ENCODE measurements at regions of chr3 and their contacts with region 1.

Region 1: DNA sequence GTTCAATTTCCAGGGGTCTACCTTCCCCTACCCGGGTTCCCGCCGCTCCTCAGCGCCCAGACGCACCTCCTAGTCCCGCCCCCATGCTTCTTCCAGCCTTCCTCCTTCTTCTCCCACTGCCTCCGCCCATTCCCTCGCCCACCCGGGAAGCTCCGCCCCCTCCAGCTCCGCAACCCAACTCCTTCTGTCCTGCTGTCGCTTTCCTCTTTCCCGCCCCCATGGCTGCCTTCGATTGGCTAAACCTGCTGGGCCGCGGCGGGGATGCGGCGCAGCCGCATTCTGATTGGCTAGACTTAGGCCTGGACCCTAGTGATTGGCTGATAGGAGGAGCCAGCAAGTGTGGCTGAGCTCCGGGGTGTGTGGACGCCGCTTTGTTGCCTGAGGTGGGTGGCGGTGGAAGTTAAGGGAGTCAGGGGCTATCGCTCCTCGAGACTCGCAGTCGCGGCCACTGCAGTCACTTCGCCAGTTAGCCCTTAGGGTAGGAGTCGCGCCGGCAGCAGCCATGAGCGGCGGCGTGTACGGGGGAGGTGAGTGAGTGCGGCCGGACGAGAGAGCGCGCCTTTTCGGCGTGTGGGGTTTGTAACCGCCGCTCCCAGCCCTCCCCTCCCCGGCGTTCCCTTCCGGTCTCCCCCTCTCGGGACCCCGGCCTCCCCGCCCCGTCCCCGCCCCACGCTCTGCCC is at the start of gene ACTL6A:
- DNase-seq: peak; percentile 99
- H3K4me3 Mint-ChIP-seq: peak within 1 kb of the TSS; percentile 98
- H3K27ac Mint-ChIP-seq: peak within 1 kb of the TSS; percentile 98
- H3K4me1 Mint-ChIP-seq: peaks cover 28% of the 10 kb centered on the region
- H3K27me3 Mint-ChIP-seq: peaks cover 2% of the 10 kb centered on the region
- total RNA-seq, gene ACTL6A: 101 to 102 TPM

Region 2: DNA sequence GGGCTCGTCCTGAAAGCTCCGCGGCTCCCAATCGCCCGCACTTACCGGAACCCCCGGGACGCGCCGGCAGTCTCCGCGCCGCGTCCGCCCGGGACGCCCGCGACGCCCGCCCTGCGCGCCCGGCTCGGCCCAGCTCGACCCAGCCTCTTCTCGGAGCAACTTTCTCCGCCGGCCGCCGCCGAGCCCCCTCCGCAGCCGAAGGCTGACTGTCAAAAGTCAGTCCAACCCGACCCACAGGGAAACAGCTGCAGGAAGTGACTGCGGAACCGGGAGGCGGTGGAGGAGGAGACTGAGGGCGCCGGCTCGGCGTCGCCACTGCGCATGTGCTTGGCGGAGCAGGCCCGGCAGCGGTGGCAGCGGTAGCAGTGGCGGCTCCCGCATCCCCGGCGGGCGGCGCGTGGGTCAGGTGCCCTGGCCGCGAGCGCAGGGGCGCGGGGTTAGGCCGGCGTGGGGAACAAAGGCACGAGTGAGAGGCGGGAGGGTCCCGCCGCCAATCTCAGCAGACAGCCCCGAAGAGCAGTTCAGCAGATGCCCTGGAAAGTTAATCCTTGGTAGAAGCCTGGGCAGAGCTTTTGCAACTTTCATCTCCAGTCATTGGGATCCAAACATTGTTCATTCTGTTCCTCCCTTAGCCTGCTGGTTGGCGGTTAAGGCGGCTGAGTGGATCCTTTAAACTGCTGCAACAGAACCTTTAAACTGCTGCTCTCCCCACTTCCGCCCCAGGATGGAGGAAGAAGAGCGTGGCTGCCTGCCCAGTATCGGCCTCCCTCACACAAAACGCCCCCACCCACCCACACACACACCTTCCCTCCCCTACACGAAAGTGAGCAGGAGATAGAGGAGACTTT is 491.0 kb before region 1 on chr3 and contains the start of gene ZMAT3:
- CTCF ChIA-PET with region 1: no interaction called
- POLR2A ChIA-PET with region 1: no interaction called
- intact Hi-C with region 1: loop called (anchors 2 kb)
- DNase-seq: peak; percentile 89
- H3K4me3 Mint-ChIP-seq: peak within 1 kb of the TSS; percentile 96
- H3K27ac Mint-ChIP-seq: peak within 1 kb of the TSS; percentile 89
- H3K4me1 Mint-ChIP-seq: peaks cover 35% of the 10 kb centered on the region
- H3K27me3 Mint-ChIP-seq: no peaks in the 10 kb centered on the region
- total RNA-seq, gene ZMAT3: 9.0 TPM

Region 3: DNA sequence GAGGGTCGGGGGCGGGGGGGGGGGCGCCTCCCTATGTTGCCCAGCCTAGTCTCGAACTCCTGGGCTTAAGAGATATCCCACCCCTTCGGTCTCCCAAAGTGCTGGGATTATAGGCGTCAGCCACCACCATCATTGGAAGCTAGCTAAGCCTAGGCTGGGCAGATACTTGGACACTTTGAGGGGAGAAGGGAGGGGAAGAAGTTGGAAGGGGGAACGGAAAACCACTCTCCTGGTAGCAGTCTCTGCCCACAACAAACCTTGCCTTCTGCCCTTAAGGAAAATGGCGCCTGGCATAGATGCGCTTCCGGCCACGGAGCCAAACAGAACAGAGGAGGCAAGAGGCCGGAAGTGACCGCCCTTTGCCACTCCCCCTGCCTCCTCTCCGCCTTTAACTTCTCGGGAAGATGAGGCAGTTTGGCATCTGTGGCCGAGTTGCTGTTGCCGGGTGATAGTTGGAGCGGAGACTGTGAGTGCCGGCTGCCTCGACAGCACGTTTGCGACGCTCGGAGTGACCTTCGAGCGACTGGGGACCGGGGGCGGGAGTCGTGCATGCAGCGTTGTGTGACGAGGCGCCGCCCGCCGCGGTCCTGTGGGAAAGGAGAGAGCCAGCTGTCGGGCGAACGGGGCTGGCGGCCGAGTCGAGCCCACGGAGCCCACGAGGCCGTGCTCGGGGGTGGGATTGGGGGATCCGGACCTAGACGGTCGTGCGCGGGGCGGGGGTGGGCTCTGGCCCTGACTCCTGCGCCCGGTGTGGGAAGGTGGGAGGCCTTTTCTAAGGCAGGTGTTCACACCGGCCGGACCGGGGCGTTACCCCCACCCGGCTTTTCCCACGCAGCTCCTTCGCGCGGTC is 215.2 kb before region 1 on chr3 and contains the start of gene MFN1:
- CTCF ChIA-PET with region 1: interaction called, 3 read pairs
- POLR2A ChIA-PET with region 1: no interaction called
- intact Hi-C with region 1: loop called (anchors 1 kb)
- DNase-seq: peak; percentile 94
- H3K4me3 Mint-ChIP-seq: peak within 1 kb of the TSS; percentile 98
- H3K27ac Mint-ChIP-seq: peak within 1 kb of the TSS; percentile 94
- H3K4me1 Mint-ChIP-seq: peaks cover 23% of the 10 kb centered on the region
- H3K27me3 Mint-ChIP-seq: no peaks in the 10 kb centered on the region
- total RNA-seq, gene MFN1: 31.1 to 31.3 TPM

Region 4: DNA sequence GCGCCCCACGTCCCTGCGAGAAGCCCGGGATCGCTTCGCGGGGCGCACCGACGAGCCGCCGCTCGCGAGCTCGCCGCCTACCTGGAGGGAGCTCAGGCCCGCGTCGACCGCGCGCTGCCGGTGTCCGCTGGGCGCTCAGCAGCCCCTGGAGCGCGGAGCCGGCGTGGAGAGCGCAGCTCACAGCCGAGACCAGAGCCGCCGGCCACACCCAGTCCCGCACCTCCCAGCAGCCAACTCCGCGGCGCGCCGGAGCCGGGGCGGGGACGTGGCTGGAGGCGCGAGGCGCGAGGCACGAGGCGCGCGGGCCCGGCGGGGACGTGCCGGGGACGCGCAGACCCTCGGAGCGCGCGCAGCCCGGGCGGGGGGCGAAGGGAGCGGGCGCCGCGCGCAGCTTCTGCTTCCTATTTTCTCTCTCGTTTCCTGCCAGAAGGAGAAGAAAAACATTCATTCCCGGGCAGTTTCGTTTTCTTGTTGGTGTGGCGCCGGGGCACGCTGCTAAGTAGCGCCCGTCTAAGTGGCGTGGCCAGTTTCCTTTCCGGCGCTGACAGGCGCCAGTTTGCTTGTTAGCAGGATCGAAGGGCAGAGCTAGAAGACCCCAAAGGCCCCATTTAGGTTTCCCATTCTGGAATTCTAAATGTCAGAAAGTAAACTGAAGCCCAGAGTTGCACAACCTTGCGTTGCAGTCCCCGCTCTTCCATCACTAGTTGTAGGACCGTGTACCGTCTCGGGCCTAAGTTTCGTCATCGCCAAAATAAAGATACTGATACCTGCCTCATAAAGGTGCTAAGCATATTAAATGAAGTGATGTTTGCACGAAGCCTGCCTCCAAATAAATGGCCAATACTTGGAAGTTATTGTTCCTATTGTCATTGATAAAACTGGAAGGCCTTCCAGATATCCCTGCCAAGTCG is 111.2 kb before region 1 on chr3 and contains the start of gene GNB4:
- CTCF ChIA-PET with region 1: interaction called, 3 read pairs
- POLR2A ChIA-PET with region 1: no interaction called
- intact Hi-C with region 1: loop called (anchors 1 kb)
- DNase-seq: peak; percentile 56
- H3K4me3 Mint-ChIP-seq: peak within 1 kb of the TSS; percentile 68
- H3K27ac Mint-ChIP-seq: no peak within 1 kb of the TSS
- H3K4me1 Mint-ChIP-seq: peaks cover 14% of the 10 kb centered on the region
- H3K27me3 Mint-ChIP-seq: peaks cover 58% of the 10 kb centered on the region
- total RNA-seq, gene GNB4: 0.51 to 0.59 TPM

Region 5: DNA sequence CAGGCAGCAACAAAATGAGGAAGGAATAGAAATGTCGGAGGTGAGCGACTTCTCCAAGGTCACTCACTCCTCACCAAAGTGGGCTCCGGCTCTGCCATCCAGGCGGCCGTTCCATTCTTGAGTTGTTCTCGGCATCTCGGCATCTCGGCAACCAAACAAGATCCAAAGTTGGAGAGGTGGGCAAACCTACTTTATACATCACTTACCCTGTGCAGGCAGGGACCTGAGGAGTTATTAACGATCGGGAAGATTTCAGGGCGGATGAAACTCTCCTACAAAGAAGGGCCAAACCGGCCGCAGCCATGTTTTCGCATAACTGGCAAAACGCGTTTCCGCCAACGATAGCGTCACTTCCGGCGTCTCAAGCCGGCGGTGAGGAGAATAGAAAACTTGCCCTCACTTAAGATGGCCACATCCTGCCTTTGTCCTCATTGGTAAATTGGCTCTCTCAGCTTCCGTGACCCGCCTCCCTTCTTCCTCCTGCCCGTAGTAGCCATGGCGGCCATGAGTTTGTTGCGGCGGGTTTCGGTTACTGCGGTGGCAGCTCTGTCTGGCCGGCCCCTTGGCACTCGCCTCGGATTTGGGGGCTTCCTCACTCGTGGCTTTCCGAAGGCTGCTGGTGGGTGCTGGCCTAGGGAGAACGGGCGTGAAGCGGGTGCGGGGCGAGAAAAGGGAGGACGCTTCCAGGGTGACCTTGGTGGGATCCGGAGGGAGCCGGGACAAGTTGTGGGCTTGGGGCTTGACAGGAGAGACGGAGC is 41.8 kb after region 1 on chr3 and contains the starts of genes MRPL47 and NDUFB5:
- CTCF ChIA-PET with region 1: no interaction called
- POLR2A ChIA-PET with region 1: interaction called, 8 read pairs
- intact Hi-C with region 1: loop called (anchors 1 kb)
- DNase-seq: peak; percentile 96
- H3K4me3 Mint-ChIP-seq: peak within 1 kb of the TSS; percentile 99
- H3K27ac Mint-ChIP-seq: peak within 1 kb of the TSS; percentile 98
- H3K4me1 Mint-ChIP-seq: peaks cover 40% of the 10 kb centered on the region
- H3K27me3 Mint-ChIP-seq: no peaks in the 10 kb centered on the region
- total RNA-seq, gene MRPL47: 51.4 to 54.0 TPM
- total RNA-seq, gene NDUFB5: 133 to 147 TPM

Region 6: DNA sequence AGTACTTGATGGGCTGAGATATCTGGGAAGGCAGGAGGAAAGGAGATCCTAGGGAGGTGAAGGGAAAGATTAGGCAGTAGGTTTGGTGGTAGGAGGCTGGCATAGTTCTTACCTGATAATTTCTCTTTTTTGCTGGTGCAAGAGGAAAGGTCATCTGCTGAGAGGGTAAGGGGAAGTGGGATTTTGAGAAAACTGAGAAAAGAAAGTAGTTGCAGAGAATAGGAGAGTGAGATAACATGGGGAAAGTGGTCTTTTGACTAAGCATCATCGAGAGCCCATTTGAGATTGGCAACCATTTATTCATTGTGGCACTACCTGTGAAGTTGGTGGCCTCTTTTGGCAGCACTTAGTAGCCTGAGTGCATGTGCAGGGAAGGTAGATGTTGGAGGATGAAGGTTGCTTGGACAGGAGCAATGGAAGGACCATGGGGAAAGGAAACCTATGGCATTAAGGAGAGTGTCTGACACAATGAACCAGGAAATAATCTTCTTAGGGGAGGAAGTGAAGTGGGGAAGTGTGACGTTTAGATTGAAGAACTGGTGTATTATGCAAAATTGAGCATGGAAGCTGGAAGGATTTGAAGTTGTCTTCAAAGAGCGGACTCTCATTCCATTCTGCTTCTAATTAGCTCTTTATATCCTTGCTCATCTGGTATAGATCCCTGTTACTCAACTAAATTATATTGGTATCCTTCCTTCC is 68.2 kb after region 1 on chr3:
- CTCF ChIA-PET with region 1: no interaction called
- POLR2A ChIA-PET with region 1: no interaction called
- intact Hi-C with region 1: no loop called
- DNase-seq: no peak
- H3K4me3 Mint-ChIP-seq: no peak overlapping the region
- H3K27ac Mint-ChIP-seq: no peak overlapping the region
- H3K4me1 Mint-ChIP-seq: no peaks in the 10 kb centered on the region
- H3K27me3 Mint-ChIP-seq: no peaks in the 10 kb centered on the region

Region 7: GRCh38 chr3:180912304-180913296 is 1349.9 kb after region 1 on chr3 and contains the start of gene FXR1:
- CTCF ChIA-PET with region 1: no interaction called
- POLR2A ChIA-PET with region 1: no interaction called
- intact Hi-C with region 1: loop called (anchors 5 kb)
- DNase-seq: peak; percentile 96
- H3K4me3 Mint-ChIP-seq: peak within 1 kb of the TSS; percentile 94
- H3K27ac Mint-ChIP-seq: peak within 1 kb of the TSS; percentile 97
- H3K4me1 Mint-ChIP-seq: peaks cover 51% of the 10 kb centered on the region
- H3K27me3 Mint-ChIP-seq: no peaks in the 10 kb centered on the region
- total RNA-seq, gene FXR1: 165 to 169 TPM

Measured in activated CD4-positive, alpha-beta memory T cell treated with anti-CD3 and anti-CD28 coated beads for 36 hours (primary cell).